Lower leg skin (tissue), 4 donors: ENCODE measurements at regions of chr17 and their contacts with region 1.

Region 1: GRCh38 chr17:17681187-17681848 is at the start of gene RAI1:
- DNase-seq: peak; percentile 55 to 93
- H3K4me3 ChIP-seq: peak within 1 kb of the TSS; percentile 62
- CTCF ChIP-seq: no peak
- POLR2A ChIP-seq: no peak
- total RNA-seq, gene RAI1: 19.4 to 38.2 (median 35.3) TPM

Region 2: DNA sequence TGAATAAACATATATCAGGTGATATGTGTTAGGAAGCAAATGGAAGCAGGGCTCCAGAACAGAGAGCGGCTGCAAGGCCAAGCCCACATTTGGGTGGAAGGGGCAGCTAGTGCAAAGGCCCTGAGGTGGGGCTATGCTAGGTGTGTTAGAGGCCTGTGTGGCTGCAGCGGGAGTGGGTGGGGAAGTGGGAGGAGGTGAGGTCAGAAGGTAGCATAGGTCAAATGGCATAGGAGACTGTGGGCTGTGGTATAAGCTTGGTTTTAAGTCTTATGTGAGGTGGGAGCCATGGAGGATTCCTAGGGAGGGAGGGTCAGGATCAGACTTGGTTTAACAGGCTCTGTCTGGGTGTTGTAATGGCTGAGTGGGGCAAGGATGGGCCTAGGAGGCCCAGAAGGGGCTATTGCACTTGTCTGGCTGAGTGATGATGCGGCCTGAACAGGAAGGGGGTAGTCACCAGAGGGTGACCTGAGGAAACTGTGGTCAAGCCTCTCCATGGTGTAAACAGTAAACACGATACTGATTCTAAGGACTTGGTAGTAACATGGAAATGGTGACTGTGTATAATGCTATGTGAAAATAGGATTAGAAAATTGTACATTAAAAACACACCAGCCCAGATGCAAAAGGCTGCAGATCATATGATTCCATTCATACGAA is 31.1 kb after region 1 on chr17:
- intact Hi-C with region 1: no loop called
- DNase-seq: no peak
- H3K4me3 ChIP-seq: no peak overlapping the region
- CTCF ChIP-seq: no peak
- POLR2A ChIP-seq: no peak

Region 3: GRCh38 chr17:17723354-17724261 is 42.3 kb after region 1 on chr17:
- intact Hi-C with region 1: loop called (anchors 5 kb)
- DNase-seq: no peak
- H3K4me3 ChIP-seq: peak overlapping the region; percentile 27
- CTCF ChIP-seq: no peak
- POLR2A ChIP-seq: no peak

Region 4: GRCh38 chr17:17792551-17793377 is 111.4 kb after region 1 on chr17:
- intact Hi-C with region 1: loop called (anchors 10 kb)
- DNase-seq: no peak
- H3K4me3 ChIP-seq: no peak overlapping the region
- CTCF ChIP-seq: no peak
- POLR2A ChIP-seq: no peak

Region 5: GRCh38 chr17:17859909-17860765 is 178.8 kb after region 1 on chr17:
- intact Hi-C with region 1: loop called (anchors 5 kb)
- DNase-seq: peak in 1 of 2 donors; percentile 92
- H3K4me3 ChIP-seq: no peak overlapping the region
- CTCF ChIP-seq: peak in 1 of 3 donors; percentile 79
- POLR2A ChIP-seq: no peak